ENCODE measurements at regions of chr6 and their contacts with region 1.

Region 1: DNA sequence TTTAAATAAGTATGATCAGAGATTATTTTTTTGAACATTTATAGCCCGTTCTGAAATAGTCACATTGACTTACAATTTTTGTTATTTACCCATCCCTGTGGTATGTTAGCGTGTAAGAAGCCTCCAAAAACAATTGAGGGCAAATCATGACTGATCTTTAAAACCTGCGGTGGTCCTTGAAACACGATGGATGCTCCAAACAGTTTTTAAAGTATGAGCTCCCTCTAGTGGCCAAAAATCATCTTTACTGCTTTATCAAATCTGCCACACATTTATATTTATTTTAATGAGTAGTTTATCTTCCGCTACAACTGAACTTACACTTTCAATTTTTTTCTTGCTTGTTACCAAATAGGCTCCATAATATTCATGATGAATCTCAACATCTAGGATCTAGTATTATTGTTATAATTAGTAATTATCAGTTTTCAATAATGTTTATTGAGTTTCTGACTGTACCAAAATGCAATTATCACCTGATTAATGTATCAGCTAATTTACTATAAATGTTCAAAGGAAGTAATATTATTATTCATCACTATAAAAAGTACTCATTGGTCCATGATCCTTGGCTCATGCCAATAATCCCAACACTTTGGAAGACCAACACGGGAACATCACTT is 52.2 kb downstream of the MARCKS start:
- DNase-seq: peak; percentile 81
- H3K4me3 ChIP-seq: no peak overlapping the region
- H3K27ac ChIP-seq: no peak overlapping the region
- H3K4me1 ChIP-seq: peaks cover 2% of the 10 kb centered on the region
- H3K27me3 ChIP-seq: no peaks in the 10 kb centered on the region
- CTCF ChIP-seq: peak; percentile 30 to 37
- POLR2A ChIP-seq: no peak

Region 2: GRCh38 chr6:112502351-112503090 is 1406.8 kb before region 1 on chr6:
- CTCF ChIA-PET with region 1: interaction called, 7 read pairs
- POLR2A ChIA-PET with region 1: no interaction called
- dilution Hi-C with region 1: no loop called
- intact Hi-C with region 1: loop called (anchors 2 kb)
- DNase-seq: peak; percentile 34
- H3K4me3 ChIP-seq: no peak overlapping the region
- H3K27ac ChIP-seq: no peak overlapping the region
- H3K4me1 ChIP-seq: peaks cover 2% of the 10 kb centered on the region
- H3K27me3 ChIP-seq: no peaks in the 10 kb centered on the region
- CTCF ChIP-seq: peak; percentile 23 to 24
- POLR2A ChIP-seq: no peak

Region 3: GRCh38 chr6:113018351-113019151 is 890.8 kb before region 1 on chr6:
- CTCF ChIA-PET with region 1: no interaction called
- POLR2A ChIA-PET with region 1: no interaction called
- dilution Hi-C with region 1: loop called (anchors 25 kb)
- intact Hi-C with region 1: no loop called
- DNase-seq: peak; percentile 96
- H3K4me3 ChIP-seq: peak overlapping the region in 1 of 3 experiments; percentile 5
- H3K27ac ChIP-seq: peak overlapping the region; percentile 96
- H3K4me1 ChIP-seq: peaks cover 24% of the 10 kb centered on the region
- H3K27me3 ChIP-seq: no peaks in the 10 kb centered on the region
- CTCF ChIP-seq: no peak
- POLR2A ChIP-seq: no peak

Region 4: GRCh38 chr6:113306552-113307145 is 602.7 kb before region 1 on chr6:
- CTCF ChIA-PET with region 1: interaction called, 10 read pairs
- POLR2A ChIA-PET with region 1: no interaction called
- dilution Hi-C with region 1: no loop called
- intact Hi-C with region 1: no loop called
- DNase-seq: peak; percentile 36
- H3K4me3 ChIP-seq: no peak overlapping the region
- H3K27ac ChIP-seq: no peak overlapping the region
- H3K4me1 ChIP-seq: no peaks in the 10 kb centered on the region
- H3K27me3 ChIP-seq: no peaks in the 10 kb centered on the region
- CTCF ChIP-seq: peak; percentile 39 to 49
- POLR2A ChIP-seq: no peak

Region 5: DNA sequence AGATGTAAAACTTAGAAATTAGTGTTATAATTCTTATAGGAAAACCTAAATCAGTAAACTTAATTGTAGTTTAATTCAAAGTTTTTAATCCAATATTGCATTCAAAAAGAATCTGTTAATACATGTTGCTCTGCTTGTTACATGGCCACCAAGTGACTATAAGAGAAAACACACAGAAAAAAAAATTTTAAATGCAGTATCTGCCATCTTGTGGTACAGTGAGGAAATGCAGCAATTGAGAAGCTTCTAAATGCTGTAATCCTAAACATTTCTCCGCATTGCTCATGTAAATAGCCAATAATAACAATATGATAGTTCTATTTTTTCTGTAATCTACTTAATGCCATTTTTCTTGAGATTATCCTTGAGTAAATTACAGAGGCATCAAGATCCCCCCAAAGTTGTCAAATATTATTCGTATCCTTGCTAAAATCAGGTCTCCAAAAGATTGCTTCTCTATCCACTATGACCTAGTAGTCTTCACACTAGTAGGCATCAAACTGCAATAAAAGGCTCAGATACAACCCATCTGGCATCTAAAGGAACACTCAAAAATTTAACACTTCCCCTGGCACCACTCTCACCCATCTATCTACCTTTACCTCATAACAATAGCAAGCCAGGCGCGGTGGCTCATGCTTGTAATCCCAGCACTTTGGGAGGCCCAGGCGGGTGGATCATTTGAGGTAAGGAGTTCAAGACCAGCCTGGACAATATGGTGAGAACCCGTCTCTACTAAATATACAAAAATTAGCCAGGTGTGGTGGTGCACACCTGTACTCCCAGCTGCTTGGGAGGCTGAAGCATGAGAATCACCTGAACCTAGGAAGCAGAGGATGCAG is 27.0 kb after region 1 on chr6:
- CTCF ChIA-PET with region 1: interaction called, 11 read pairs
- POLR2A ChIA-PET with region 1: no interaction called
- dilution Hi-C with region 1: no loop called
- intact Hi-C with region 1: no loop called
- DNase-seq: peak; percentile 86
- H3K4me3 ChIP-seq: no peak overlapping the region
- H3K27ac ChIP-seq: no peak overlapping the region
- H3K4me1 ChIP-seq: no peaks in the 10 kb centered on the region
- H3K27me3 ChIP-seq: no peaks in the 10 kb centered on the region
- CTCF ChIP-seq: peak; percentile 52
- POLR2A ChIP-seq: no peak

Region 6: DNA sequence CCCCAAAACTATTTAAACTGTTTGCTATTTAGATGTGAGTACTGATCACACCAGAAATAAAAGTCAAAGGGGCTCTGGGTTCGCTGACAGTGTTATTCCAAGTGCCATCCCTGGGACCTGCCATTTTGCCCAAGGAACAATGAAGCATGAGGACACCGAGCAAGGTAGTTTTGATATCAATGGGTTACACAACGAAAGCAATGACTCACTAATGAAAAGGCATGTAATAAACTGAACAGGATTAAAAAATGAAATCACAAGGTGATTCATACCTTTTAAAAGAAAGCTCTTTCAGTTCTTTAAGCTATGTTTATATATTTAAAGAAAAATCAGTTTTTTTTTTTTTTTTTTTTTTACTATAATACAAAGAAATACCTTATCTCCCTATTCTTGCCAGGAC is 331.5 kb after region 1 on chr6:
- CTCF ChIA-PET with region 1: no interaction called
- POLR2A ChIA-PET with region 1: no interaction called
- dilution Hi-C with region 1: no loop called
- intact Hi-C with region 1: no loop called
- DNase-seq: no peak
- H3K4me3 ChIP-seq: no peak overlapping the region
- H3K27ac ChIP-seq: no peak overlapping the region
- H3K4me1 ChIP-seq: no peaks in the 10 kb centered on the region
- H3K27me3 ChIP-seq: no peaks in the 10 kb centered on the region
- CTCF ChIP-seq: no peak
- POLR2A ChIP-seq: no peak